Astrocyte of the cerebellum (primary cell): ENCODE measurements at regions of chr1 and their contacts with region 1.

Region 1: DNA sequence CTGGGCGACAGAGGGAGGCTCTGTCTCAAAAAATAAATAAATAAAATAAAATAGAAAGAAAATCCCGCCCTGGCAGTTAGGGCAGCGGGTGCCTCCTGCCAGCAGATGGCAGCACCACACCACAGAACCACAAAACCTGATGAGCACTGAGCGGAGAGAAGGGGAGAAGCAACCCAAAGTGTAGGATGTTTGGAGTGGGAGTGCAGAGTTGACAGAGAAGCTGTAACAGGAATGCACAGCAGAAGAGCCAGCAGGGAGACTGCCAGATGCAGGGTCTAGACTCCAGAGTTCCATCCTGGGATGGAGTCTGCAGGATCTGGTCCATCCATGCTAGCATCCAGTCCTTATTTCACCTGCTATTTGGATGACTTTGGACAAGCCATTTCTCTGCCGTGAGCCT is 29.7 kb upstream of the KIRREL1 start:
- DNase-seq: no peak
- H3K4me3 ChIP-seq: no peak overlapping the region
- CTCF ChIP-seq: peak; percentile 86

Region 2: DNA sequence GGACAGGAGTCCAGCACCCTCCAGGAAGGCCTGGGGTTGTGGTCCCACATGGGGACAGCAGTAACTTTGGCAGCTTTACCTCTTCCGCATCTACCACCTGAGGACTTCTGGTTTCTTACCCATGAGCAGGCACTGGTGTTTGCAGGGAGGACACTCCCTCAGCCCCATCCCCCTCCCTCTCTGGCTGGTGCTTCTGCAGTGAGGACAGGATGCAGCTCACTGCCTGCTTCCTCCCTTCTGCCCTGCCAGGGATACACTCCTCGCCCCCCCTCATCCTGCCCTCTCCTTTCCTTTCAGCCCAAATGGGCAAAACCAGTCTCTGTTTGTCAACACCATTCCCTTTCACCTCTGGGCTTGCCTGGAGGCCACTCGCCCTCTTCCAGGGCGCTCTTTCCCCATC is 92.1 kb after region 1 on chr1:
- in situ Hi-C with region 1: no loop called
- DNase-seq: no peak
- H3K4me3 ChIP-seq: no peak overlapping the region
- CTCF ChIP-seq: no peak

Region 3: GRCh38 chr1:159009704-159010361 is 1046.1 kb after region 1 on chr1 and contains the start of gene IFI16:
- in situ Hi-C with region 1: loop called (anchors 25 kb)
- DNase-seq: peak; percentile 86
- H3K4me3 ChIP-seq: peak within 1 kb of the TSS; percentile 63
- CTCF ChIP-seq: no peak